SK-N-SH (cell line): ENCODE measurements at regions of chr20 and their contacts with region 1.

Region 1: DNA sequence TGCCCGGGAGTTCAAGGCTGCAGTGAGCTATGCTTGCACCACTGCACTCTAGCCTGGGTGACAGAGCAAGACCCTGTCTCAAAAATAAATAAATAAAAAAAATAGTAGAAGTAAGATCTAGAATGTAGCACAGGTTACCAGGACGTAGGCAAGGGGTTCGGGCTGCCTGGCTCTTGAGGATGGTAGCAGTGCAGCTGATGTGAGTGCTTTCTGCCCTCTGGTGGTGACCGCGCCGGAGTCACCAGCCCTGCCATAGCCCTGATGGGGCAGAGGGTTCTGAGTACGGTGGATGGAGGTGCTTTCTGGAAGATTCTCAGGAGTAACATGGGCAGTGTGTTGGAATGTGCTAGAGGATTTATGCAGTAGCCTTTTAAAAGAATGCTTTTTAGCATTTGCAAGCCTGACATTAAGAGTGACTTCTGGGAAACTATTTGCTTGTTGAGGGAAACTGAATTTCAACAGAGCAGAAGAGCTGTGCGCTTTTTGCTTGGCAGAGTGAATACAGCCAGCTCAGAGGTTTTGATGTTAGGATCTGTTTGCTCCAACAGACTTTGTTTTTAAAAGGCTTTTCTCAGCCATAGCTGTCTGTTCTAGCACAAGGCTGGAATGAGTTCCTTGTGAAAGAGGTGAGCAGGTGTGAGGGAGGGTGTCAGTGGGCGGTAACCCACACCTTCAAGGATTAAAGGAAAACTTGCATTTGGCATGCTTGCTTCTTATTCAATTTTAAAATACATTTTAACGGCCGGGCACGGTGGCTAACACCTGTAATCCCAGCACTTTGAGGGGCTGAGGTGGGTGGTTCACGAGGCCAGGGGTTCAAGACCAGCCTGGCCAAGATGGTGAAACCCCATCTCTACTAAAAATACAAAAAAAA is 65.9 kb downstream of the PTPN1 start:
- DNase-seq: peak; percentile 70
- H3K4me3 ChIP-seq: no peak overlapping the region
- H3K27ac ChIP-seq: no peak overlapping the region
- H3K4me1 ChIP-seq: peaks cover 22 to 45% of the 10 kb centered on the region in 2 experiments
- H3K27me3 ChIP-seq: no peaks in the 10 kb centered on the region
- CTCF ChIP-seq: peak; percentile 78
- EP300 ChIP-seq: no peak
- RAD21 ChIP-seq: peak; percentile 74

Region 2: DNA sequence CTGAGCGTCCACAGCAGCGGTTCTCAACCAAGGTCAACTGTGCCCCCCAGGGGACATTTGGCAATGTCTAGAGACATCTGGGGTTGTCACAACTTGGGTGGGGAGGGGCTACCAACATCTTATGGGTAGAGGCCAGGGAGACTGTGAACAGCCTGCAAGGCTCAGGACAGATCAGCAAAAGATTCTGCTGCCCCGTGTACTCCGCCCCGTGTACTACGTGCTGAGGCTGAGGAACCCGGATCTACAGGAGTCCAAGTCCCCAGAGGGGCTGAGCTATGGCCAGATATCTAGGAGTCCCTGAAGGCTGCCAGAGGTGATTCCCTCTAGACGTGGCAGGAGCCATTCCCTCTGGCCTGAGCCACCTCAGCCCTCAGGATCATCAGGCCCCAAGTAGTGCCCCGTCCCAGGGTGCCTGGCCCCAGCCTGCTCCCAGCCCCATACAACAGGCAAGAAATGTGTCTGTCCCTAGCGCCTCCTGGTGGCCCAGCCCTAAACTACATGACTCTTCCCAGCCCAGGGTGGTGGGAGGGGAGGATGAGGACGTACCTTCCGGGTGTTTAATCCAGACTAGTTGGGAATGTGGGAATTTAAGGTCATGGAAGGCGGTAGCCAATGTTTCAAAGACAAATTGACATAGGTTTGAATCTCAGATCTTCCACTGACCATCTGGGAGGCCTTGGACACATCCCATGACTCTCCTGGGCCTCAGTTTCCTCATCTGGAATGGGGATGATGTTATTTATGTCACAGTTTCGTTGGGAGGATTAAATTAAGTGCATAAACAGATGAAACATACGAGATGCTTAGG is 115.4 kb before region 1 on chr20:
- CTCF ChIA-PET with region 1: interaction called, 23 read pairs
- POLR2A ChIA-PET with region 1: no interaction called
- DNase-seq: peak; percentile 92
- H3K4me3 ChIP-seq: peak overlapping the region in 1 of 2 experiments; percentile 49; a peak in 1 of 4 replicates
- H3K27ac ChIP-seq: no peak overlapping the region
- H3K4me1 ChIP-seq: peaks cover 0 to 8% of the 10 kb centered on the region in 2 experiments; a peak in 2 of 4 replicates
- H3K27me3 ChIP-seq: no peaks in the 10 kb centered on the region
- CTCF ChIP-seq: peak; percentile 86
- EP300 ChIP-seq: no peak
- RAD21 ChIP-seq: peak; percentile 87

Region 3: DNA sequence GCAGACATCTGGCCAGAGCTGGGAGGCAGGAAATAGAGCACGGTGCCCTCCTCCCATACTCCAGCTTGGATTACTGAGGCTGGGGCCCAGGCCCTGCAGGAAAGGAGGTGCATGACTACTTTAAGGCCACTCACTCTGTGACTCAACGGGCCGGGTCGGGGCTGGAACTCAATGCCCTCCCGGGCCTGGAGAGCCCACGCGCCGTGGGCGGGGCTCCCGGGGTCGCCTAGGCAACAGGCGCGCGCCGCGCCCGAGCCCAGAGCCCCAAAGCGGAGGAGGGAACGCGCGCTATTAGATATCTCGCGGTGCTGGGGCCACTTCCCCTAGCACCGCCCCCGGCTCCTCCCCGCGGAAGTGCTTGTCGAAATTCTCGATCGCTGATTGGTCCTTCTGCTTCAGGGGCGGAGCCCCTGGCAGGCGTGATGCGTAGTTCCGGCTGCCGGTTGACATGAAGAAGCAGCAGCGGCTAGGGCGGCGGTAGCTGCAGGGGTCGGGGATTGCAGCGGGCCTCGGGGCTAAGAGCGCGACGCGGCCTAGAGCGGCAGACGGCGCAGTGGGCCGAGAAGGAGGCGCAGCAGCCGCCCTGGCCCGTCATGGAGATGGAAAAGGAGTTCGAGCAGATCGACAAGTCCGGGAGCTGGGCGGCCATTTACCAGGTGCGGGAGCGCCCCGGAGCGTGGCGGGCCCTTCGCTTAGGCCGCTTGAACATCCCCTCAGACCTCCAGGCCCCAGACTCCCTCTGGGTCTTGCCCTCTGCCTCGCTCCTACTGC is 66.0 kb before region 1 on chr20 and contains the start of gene PTPN1:
- CTCF ChIA-PET with region 1: interaction called, 13 read pairs
- POLR2A ChIA-PET with region 1: no interaction called
- DNase-seq: peak; percentile 98
- H3K4me3 ChIP-seq: peak within 1 kb of the TSS; percentile 71 to 97
- H3K27ac ChIP-seq: peak within 1 kb of the TSS; percentile 79 to 82
- H3K4me1 ChIP-seq: peaks cover 15 to 27% of the 10 kb centered on the region in 2 experiments
- H3K27me3 ChIP-seq: no peaks in the 10 kb centered on the region
- CTCF ChIP-seq: no peak
- EP300 ChIP-seq: no peak
- RAD21 ChIP-seq: no peak
- polyA plus RNA-seq, gene PTPN1: 23.6 and 25.2 TPM in 2 replicates

Region 4: GRCh38 chr20:50561379-50562078 is 14.6 kb before region 1 on chr20:
- CTCF ChIA-PET with region 1: interaction called, 21 read pairs
- POLR2A ChIA-PET with region 1: no interaction called
- DNase-seq: no peak
- H3K4me3 ChIP-seq: peak overlapping the region in 1 of 2 experiments; percentile 19; a peak in 1 of 4 replicates
- H3K27ac ChIP-seq: peak overlapping the region; percentile 62 to 95
- H3K4me1 ChIP-seq: peaks cover 23 to 29% of the 10 kb centered on the region in 2 experiments; a peak in 3 of 4 replicates
- H3K27me3 ChIP-seq: no peaks in the 10 kb centered on the region
- CTCF ChIP-seq: no peak
- EP300 ChIP-seq: peak in 1 of 2 experiments; percentile 63; a peak in 1 of 4 replicates
- RAD21 ChIP-seq: no peak

Region 5: GRCh38 chr20:50588034-50588611 is 12.0 kb after region 1 on chr20:
- CTCF ChIA-PET with region 1: interaction called, 15 read pairs
- POLR2A ChIA-PET with region 1: no interaction called
- DNase-seq: peak; percentile 90
- H3K4me3 ChIP-seq: no peak overlapping the region
- H3K27ac ChIP-seq: no peak overlapping the region; a peak in 1 of 4 replicates
- H3K4me1 ChIP-seq: peaks cover 0 to 4% of the 10 kb centered on the region in 2 experiments; a peak in 1 of 4 replicates
- H3K27me3 ChIP-seq: no peaks in the 10 kb centered on the region
- CTCF ChIP-seq: peak; percentile 98
- EP300 ChIP-seq: no peak
- RAD21 ChIP-seq: peak; percentile 57